ENCODE measurements at regions of chr19 and their contacts with region 1.

Region 1: DNA sequence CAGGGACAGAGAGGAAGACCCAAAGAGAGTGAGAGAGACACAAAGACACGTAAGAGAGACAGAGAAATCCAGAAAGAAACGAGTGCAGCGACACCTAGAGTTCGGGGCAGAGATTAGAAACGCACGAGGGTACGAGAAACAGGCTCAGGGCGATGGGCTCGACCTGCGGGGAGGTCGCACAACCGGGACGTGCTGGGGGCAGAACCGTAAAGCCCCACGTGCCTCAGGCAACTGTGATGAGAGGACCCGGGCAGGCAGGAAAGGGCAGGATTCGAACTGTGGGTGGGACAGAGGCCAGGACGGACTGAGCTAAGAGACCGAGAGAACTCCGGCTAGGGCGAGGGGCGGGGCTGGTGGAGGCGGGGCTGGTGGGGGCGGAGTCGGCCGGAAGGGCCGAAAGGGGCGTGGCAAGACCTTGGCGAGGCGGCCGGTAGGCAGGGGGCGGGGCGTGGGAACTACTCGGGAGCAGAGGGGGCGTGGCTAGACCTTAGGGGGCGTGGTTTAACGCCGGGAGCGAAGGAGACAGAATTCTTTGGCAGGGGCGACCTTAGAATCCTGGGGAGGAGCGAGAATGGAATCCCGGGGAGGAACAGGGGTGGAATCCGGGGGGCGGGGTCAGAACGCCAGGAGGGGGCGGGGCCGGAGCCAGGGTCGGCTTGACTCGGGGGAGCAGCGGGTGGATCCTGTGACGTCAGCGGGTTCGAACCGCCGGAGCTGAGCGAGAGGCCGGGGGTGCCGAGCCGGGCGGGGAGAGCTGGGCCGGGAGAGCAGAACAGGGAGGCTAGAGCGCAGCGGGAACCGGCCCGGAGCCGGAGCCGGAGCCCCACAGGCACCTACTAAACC is at the start of gene NECTIN2:
- DNase-seq: peak; percentile 96
- H3K4me3 ChIP-seq: peak within 1 kb of the TSS; percentile 73 to 94 (median 87)
- H3K27ac ChIP-seq: peak within 1 kb of the TSS; percentile 92
- H3K4me1 ChIP-seq: peaks cover 22% of the 10 kb centered on the region
- H3K27me3 ChIP-seq: no peaks in the 10 kb centered on the region
- CTCF ChIP-seq: peak; percentile 72 to 77
- total RNA-seq, gene NECTIN2: 51.0 to 74.5 TPM

Region 2: DNA sequence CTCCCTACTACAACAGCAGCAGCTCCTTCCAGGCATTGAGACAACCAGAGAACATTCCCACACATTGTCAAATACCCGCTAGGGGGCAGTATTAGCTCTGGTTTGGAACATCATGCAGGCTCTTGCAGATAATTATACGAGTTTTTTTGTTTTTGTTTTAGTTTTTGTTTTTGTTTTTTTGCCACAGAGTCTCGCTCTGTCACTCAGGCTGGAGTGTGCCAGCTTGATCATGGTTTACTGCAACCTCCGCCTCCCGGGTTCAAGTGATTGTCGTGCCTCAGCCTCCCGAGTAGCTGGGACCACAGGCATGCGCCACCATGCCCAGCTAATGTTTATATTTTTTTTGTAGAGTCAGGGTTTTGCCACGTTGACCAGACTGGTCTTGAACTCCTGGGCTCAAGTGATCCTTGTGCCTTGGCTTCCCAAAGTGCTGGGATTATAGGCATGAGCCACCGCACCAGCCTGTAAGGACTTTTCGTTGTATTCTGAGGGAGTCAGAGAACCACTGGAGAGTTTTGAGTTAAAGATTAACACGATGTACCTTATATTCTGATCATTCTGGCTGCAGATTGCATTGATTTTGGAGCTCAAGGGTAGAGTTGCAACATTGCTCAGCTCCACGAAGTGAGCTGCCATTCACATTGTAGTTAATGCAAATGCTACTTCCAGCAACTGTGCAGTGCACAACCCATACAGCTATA is 274.7 kb before region 1 on chr19:
- CTCF ChIA-PET with region 1: no interaction called
- dilution Hi-C with region 1: no loop called
- in situ Hi-C with region 1: no loop called
- intact Hi-C with region 1: loop called (anchors 5 kb)
- DNase-seq: peak; percentile 55
- H3K4me3 ChIP-seq: no peak overlapping the region
- H3K27ac ChIP-seq: no peak overlapping the region
- H3K4me1 ChIP-seq: no peaks in the 10 kb centered on the region
- H3K27me3 ChIP-seq: no peaks in the 10 kb centered on the region
- CTCF ChIP-seq: peak; percentile 71 to 75

Region 3: GRCh38 chr19:44689056-44689895 is 156.6 kb before region 1 on chr19:
- CTCF ChIA-PET with region 1: no interaction called
- dilution Hi-C with region 1: no loop called
- in situ Hi-C with region 1: no loop called
- intact Hi-C with region 1: loop called (anchors 1 kb)
- DNase-seq: no peak
- H3K4me3 ChIP-seq: no peak overlapping the region
- H3K27ac ChIP-seq: no peak overlapping the region
- H3K4me1 ChIP-seq: peaks cover 23% of the 10 kb centered on the region
- H3K27me3 ChIP-seq: no peaks in the 10 kb centered on the region
- CTCF ChIP-seq: peak; percentile 87 to 94

Region 4: DNA sequence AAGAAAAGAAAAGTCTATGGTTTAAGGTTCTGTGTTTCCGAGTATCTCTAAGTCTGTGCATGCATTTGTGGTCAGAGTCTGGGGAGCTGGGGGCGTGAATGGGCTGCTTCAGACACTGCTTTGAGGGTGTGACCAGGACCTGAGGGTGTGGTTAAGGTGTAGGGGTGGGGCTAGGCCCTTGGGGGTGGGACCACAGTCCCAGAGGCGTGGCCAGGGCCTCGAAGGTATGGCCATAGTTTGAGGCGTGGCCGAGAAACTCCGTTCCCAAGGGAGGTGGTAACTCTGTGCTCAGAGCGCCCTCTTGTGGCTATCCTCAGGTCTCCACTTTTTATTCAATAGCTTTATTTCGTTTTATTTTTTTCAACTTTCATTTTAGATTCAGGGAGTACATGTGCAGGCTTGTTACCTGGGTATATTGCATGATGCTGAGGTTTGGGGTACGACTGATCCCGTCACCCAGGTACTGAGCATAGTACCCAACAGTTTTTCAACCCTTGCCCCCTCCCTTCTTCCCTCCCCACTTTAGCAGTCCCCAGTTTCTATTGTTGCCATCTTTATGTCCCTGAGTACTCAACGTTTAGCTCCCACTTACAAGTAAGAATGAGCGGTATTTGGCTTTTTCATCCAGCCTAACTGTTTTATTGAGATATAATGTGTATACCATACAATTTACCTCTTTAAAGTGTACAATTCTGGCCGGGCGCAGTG is 75.1 kb before region 1 on chr19:
- CTCF ChIA-PET with region 1: no interaction called
- dilution Hi-C with region 1: no loop called
- in situ Hi-C with region 1: no loop called
- intact Hi-C with region 1: loop called (anchors 1 kb)
- DNase-seq: peak; percentile 97
- H3K4me3 ChIP-seq: no peak overlapping the region
- H3K27ac ChIP-seq: peak overlapping the region; percentile 73
- H3K4me1 ChIP-seq: peaks cover 31% of the 10 kb centered on the region
- H3K27me3 ChIP-seq: no peaks in the 10 kb centered on the region
- CTCF ChIP-seq: peak; percentile 57 to 75

Region 5: DNA sequence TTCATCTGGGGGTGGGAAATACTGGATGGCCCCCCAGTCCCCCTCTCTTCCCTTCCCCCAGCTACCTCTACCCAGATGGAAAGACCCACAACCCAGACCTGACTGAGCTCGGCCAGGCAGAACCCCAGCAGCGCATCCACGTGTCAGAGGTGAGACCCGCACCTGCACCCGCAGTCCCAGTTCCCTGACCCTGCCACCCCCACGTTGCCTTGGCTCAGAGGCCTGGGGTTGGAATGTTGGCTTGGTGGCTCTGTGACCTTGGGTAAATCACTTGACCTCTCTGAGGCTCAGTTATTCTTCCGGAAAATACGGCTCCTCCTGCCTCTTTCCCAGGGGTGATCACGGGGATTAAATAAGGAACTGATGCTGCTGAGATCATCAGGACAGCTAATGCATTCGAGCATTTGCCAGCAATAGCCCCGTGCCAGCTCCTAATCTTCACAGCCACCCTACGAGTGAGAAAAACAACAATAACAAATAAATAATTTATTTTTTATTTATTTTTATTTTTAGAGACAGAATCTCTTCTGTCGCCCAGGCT is 55.8 kb before region 1 on chr19:
- CTCF ChIA-PET with region 1: no interaction called
- dilution Hi-C with region 1: no loop called
- in situ Hi-C with region 1: no loop called
- intact Hi-C with region 1: loop called (anchors 2 kb)
- DNase-seq: no peak
- H3K4me3 ChIP-seq: no peak overlapping the region
- H3K27ac ChIP-seq: no peak overlapping the region
- H3K4me1 ChIP-seq: no peaks in the 10 kb centered on the region
- H3K27me3 ChIP-seq: no peaks in the 10 kb centered on the region
- CTCF ChIP-seq: no peak

Region 6: DNA sequence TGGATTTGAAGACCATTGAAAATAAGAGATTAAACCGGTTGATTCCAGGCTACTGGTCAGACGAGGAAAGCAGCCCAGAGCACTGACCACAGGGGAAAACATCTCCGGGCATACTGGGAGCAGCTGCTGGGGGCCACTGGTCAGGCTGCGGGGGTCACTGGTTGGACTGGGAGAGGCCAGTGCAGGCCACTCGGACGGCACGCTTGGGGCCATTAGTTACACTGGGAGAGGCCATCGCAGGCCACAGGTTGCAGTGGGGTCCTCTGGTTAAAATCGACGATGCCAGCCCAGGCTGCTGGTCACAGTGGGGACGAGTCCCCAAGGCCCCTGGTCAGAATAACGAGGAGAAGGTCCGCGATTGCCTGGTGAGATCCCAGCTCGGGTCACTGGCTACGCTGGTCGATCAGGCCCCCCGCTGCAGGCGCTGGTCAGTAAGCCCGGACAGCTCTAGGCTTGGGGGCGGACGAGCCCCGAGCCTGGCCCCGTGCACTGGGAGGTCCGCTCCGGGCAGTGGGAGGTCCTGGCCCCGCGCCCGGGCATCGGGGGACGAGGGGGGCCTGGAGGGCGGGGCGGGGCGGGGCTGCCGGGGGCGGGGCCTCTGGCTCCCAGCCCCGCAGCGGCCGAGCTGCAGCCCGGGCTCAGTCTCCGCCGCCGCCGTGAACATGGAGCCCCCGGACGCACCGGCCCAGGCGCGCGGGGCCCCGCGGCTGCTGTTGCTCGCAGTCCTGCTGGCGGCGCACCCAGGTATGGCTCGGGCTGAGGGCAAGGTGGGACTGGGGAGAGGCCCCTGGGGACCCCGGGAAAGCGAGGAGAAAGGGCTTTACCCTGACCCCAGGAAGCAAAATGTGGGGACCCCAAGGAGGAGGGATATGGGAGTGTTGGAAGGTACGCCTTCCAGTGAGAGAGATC is 37.1 kb before region 1 on chr19 and contains the start of gene BCAM:
- CTCF ChIA-PET with region 1: interaction called, 16 read pairs
- dilution Hi-C with region 1: no loop called
- in situ Hi-C with region 1: no loop called
- intact Hi-C with region 1: no loop called
- DNase-seq: peak; percentile 40
- H3K4me3 ChIP-seq: peak within 1 kb of the TSS; percentile 60 to 73 (median 73)
- H3K27ac ChIP-seq: peak within 1 kb of the TSS; percentile 50
- H3K4me1 ChIP-seq: peaks cover 40% of the 10 kb centered on the region
- H3K27me3 ChIP-seq: no peaks in the 10 kb centered on the region
- CTCF ChIP-seq: no peak
- total RNA-seq, gene BCAM: 114 to 120 TPM

Region 7: GRCh38 chr19:44890366-44891015 is 44.7 kb after region 1 on chr19:
- CTCF ChIA-PET with region 1: interaction called, 3 read pairs
- dilution Hi-C with region 1: no loop called
- in situ Hi-C with region 1: no loop called
- intact Hi-C with region 1: loop called (anchors 1 kb)
- DNase-seq: peak; percentile 100
- H3K4me3 ChIP-seq: peak overlapping the region; percentile 36 to 51 (median 43)
- H3K27ac ChIP-seq: peak overlapping the region; percentile 84
- H3K4me1 ChIP-seq: peaks cover 16% of the 10 kb centered on the region
- H3K27me3 ChIP-seq: no peaks in the 10 kb centered on the region
- CTCF ChIP-seq: no peak